Mammary epithelial cell (primary cell): ENCODE measurements at regions of chr15 and their contacts with region 1.

Region 1: GRCh38 chr15:74768771-74769342 is 13.0 kb upstream of the CSK start:
- DNase-seq: no peak
- H3K4me3 ChIP-seq: no peak overlapping the region
- H3K27ac ChIP-seq: no peak overlapping the region
- H3K4me1 ChIP-seq: peaks cover 4% of the 10 kb centered on the region
- H3K27me3 ChIP-seq: no peaks in the 10 kb centered on the region
- CTCF ChIP-seq: peak; percentile 76 to 82

Region 2: DNA sequence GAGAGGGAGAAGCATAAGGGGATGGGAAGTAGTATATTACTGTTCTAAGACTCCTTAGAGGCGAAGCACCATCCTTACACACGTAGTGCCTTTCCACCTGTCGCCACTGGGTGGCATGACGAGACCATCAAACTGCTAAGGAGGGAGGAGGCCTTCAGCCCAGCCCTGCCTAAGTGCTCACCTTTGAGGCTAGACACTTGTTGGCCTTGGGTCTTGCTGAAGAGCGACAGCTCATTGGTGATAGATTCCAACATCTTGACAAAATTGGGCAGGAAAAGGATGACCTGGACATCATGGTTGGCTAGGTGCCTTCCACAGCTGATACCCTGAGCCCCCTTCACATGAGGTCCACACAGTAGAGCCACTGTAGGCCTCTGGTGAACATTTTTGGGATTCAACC is 133.6 kb before region 1 on chr15:
- CTCF ChIA-PET with region 1: interaction called, 4 read pairs
- dilution Hi-C with region 1: loop called (anchors 5 kb)
- in situ Hi-C with region 1: loop called (anchors 5 kb)
- intact Hi-C with region 1: loop called (anchors 1 kb)
- DNase-seq: peak; percentile 55
- H3K4me3 ChIP-seq: no peak overlapping the region
- H3K27ac ChIP-seq: no peak overlapping the region
- H3K4me1 ChIP-seq: no peaks in the 10 kb centered on the region
- H3K27me3 ChIP-seq: no peaks in the 10 kb centered on the region
- CTCF ChIP-seq: peak; percentile 88 to 96

Region 3: DNA sequence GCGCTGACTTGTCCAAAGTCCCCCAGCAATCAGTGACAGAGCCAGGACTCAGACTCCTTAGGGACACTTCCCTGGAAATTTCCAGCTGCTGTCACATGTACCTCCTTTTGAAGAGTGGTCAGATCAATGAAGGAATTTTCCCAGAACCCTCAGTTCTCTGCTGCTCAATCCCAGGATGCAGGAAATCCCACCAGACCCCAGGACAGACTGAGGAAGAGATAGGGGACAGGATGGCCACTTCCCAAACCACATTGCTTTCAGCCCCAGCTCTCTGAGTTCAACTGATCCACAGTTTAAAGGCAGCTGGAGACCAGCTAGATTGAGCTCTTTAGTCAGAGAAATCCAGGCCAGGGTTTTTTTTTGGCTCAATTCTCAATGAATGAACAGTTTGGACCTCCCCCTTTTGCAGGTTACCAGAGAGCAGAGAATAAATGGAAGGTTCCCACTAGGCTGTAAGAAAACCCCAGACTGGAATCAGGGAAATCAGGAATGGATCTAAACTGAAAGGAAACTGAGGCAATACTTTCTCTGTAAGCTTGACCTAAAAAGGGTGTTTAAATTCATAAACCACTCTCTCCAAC is 45.0 kb before region 1 on chr15:
- CTCF ChIA-PET with region 1: no interaction called
- dilution Hi-C with region 1: no loop called
- in situ Hi-C with region 1: no loop called
- intact Hi-C with region 1: no loop called
- DNase-seq: peak; percentile 74
- H3K4me3 ChIP-seq: no peak overlapping the region
- H3K27ac ChIP-seq: no peak overlapping the region
- H3K4me1 ChIP-seq: peaks cover 12% of the 10 kb centered on the region
- H3K27me3 ChIP-seq: no peaks in the 10 kb centered on the region
- CTCF ChIP-seq: no peak

Region 4: DNA sequence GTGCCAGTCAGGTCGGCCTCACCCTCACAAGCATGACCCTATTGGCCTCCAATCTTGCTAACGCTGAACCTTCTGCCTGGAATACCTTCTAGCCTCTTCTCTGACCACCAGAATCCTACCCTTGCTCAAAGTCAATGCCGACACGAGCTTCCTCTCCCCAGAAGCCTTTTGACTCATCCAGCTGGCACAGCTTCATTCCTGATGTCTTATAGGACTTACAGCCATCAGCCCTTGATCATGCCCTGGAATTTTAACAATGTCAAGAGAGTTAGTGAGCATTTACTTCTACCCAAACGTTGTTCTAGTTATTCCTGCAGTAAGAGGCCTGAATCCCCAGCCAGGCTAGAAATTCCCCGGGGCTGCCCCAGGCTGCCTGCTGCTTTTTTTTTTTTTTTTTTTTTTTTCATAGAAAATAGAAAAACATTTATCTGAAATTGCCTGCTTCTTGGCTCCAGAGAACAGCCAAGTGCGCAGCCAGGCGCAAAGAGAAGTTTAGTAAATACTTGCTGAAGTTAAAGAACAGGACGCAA is 16.3 kb before region 1 on chr15:
- CTCF ChIA-PET with region 1: interaction called, 11 read pairs
- dilution Hi-C with region 1: no loop called
- in situ Hi-C with region 1: no loop called
- intact Hi-C with region 1: no loop called
- DNase-seq: peak; percentile 41
- H3K4me3 ChIP-seq: no peak overlapping the region
- H3K27ac ChIP-seq: no peak overlapping the region
- H3K4me1 ChIP-seq: no peaks in the 10 kb centered on the region
- H3K27me3 ChIP-seq: no peaks in the 10 kb centered on the region
- CTCF ChIP-seq: no peak

Region 5: DNA sequence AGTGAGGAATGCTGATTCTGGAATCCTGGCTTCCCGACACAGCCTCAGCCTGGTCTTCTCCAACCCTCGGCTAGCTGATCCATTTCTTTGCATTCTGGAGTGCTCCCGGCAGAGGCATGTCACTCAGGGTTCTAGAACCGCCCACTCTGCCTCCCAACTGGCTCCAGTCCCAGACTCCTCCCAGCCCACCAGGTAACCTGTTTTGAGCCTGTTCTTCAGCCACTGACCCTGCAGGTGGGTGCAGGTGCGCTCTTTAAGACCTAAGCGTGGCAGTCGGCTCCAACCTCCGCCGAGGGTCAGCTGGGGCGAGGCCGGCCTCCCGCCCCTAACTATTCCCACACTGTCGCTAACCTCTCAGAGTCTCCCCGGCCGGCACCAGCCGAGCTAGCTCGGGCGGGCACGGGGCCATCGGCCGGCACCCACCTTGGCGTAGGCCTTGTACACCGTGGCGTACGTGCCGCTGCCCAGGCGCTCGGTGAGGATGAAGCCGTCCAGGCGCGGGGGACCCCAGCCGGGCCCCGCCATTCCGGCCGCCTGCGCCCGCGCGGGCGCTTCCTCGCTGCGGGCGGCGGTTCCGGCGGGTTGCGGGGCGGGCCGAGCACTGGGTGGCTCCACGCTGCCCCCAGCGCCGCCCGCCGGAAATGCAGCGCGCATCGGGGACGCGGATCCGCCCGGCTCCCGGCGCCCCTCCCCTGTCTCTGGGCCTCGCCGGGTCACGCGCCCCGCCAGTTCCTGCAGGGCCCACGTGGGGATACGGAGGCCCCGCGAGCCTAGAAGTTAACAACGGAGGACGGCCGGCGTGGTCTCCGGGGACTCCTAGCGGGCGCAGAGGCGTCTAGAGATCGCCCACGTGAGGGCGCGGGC is 74.0 kb after region 1 on chr15 and contains the start of gene ULK3:
- CTCF ChIA-PET with region 1: no interaction called
- dilution Hi-C with region 1: no loop called
- in situ Hi-C with region 1: no loop called
- intact Hi-C with region 1: loop called (anchors 2 kb)
- DNase-seq: peak; percentile 82
- H3K4me3 ChIP-seq: peak within 1 kb of the TSS; percentile 78 to 98 (median 89)
- H3K27ac ChIP-seq: peak within 1 kb of the TSS; percentile 49
- H3K4me1 ChIP-seq: peaks cover 8% of the 10 kb centered on the region
- H3K27me3 ChIP-seq: no peaks in the 10 kb centered on the region
- CTCF ChIP-seq: peak; percentile 39 to 56
- total RNA-seq, gene ULK3: 20.0 to 26.3 TPM

Region 6: GRCh38 chr15:74950078-74951000 is 181.5 kb after region 1 on chr15:
- CTCF ChIA-PET with region 1: interaction called, 8 read pairs
- dilution Hi-C with region 1: no loop called
- in situ Hi-C with region 1: loop called in 1 of 2 experiments (anchors 5 kb)
- intact Hi-C with region 1: loop called (anchors 1 kb)
- DNase-seq: peak; percentile 59
- H3K4me3 ChIP-seq: no peak overlapping the region
- H3K27ac ChIP-seq: no peak overlapping the region
- H3K4me1 ChIP-seq: no peaks in the 10 kb centered on the region
- H3K27me3 ChIP-seq: no peaks in the 10 kb centered on the region
- CTCF ChIP-seq: peak; percentile 99 to 100